ENCODE measurements at regions of chr6 and their contacts with region 1.

Region 1: DNA sequence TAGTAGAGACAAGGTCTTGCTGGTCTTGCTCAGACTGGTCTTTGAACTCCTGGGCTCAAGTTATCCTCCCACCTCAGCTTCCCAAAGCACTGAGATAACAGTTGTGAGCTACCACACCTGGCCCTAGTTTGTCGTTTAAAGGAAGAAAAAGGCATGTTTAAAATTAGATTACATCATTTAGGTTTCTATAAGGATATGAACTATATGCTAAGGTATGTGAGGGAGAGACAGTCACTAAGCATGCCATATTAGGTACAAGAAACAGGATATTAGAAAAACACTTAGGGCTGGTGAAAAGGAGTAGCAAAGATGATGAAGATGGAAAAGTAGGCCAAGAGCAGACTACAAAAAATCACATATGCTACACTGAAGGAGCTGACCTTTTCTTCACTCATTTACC is 106.4 kb downstream of the ASCC3 start:
- DNase-seq: no peak
- H3K4me3 ChIP-seq: no peak overlapping the region
- H3K27ac ChIP-seq: no peak overlapping the region
- H3K4me1 ChIP-seq: no peaks in the 10 kb centered on the region
- H3K27me3 ChIP-seq: no peaks in the 10 kb centered on the region
- CTCF ChIP-seq: no peak
- EP300 ChIP-seq: no peak
- POLR2A ChIP-seq: no peak

Region 2: GRCh38 chr6:99344289-99344688 is 1430.4 kb before region 1 on chr6:
- intact Hi-C with region 1: no loop called
- DNase-seq: no peak
- H3K4me3 ChIP-seq: no peak overlapping the region
- H3K27ac ChIP-seq: no peak overlapping the region
- H3K4me1 ChIP-seq: no peaks in the 10 kb centered on the region
- H3K27me3 ChIP-seq: no peaks in the 10 kb centered on the region
- CTCF ChIP-seq: no peak
- EP300 ChIP-seq: no peak
- POLR2A ChIP-seq: no peak

Region 3: DNA sequence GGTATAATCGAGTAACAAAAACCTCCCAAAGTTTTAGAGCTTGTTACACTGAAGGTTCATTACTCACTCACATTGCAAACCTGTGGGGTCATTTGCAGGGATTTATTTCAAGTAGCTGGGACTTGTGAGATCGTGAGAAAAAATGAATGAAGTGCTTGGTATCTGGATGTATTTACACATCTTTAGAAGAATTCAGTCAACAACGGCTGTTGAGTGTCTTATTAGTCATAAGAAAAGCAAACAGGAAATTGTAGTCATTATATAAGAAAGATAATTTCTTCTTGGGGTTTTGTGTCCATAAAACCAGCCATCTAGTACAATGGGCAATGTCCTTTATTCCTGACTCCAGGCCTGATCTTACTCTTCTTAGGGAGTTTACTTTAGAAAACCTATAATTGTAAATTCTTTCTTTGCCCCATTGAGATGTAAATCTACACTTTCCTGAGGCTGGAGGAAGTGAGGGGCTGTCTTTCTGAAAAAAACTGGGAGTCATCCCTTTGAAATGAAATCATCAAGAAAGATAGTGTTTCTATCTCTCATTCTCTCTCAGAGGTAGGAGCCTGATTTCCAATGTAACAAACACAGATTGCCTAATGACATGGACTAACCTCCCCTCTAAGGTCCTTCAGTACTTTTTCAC is 309.0 kb after region 1 on chr6:
- intact Hi-C with region 1: loop called in 1 of 4 experiments (anchors 5 kb)
- DNase-seq: no peak
- H3K4me3 ChIP-seq: no peak overlapping the region
- H3K27ac ChIP-seq: no peak overlapping the region
- H3K4me1 ChIP-seq: no peaks in the 10 kb centered on the region
- H3K27me3 ChIP-seq: no peaks in the 10 kb centered on the region
- CTCF ChIP-seq: no peak
- EP300 ChIP-seq: no peak
- POLR2A ChIP-seq: no peak

Region 4: GRCh38 chr6:101799531-101799930 is 1024.8 kb after region 1 on chr6:
- intact Hi-C with region 1: no loop called
- DNase-seq: no peak
- H3K4me3 ChIP-seq: no peak overlapping the region
- H3K27ac ChIP-seq: no peak overlapping the region
- H3K4me1 ChIP-seq: no peaks in the 10 kb centered on the region
- H3K27me3 ChIP-seq: no peaks in the 10 kb centered on the region
- CTCF ChIP-seq: no peak
- EP300 ChIP-seq: no peak
- POLR2A ChIP-seq: no peak